Gastrocnemius medialis (tissue), 4 donors: ENCODE measurements at regions of chr10 and their contacts with region 1.

Region 1: DNA sequence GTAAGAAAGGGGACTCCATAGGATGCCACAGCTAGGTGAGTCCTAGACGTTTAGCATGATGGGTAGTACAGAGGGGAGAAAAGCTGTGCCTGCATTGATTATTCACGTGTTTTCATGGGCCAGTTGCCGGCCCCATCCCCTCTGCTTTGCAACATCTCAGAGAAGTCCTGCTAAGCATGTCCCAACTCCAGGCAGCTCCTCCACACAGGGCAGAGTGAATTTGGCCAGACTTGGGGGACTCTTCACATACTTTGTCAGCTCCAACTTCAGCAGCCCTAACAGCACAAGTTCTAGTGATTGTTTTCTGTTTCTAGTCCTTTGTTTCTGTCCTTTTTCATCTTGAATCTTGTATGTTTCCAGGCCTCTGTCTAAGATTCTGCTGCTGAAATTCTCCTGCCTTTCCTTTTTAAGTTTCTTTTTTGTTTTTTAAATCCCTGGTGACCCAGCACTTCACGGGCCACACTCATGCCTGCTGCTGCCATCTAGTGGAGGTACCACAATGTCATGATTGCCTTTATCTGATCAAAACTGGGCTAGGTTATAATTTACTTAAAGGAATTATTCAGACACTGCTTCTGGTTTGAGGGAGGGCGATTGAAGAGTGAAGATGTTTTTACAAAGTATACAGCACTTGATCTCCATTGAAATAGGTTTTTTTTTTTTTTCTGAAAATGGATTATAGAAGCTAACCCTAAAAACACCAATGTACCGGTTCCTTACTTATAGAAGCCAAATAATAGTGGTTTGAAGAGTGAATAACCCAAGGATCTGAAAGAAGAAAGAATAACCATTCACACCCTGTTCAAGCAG is 276.9 kb downstream of the CSTF2T start:
- DNase-seq: peak; percentile 12 to 45
- ATAC-seq: peak; percentile 55 to 79
- H3K4me3 ChIP-seq: peak overlapping the region in 2 of 4 donors; percentile 6 to 35
- H3K27ac ChIP-seq: peak overlapping the region; percentile 52 to 74 (median 54)
- H3K4me1 ChIP-seq: peaks cover 17 to 37% of the 10 kb centered on the region in 2 donors
- H3K27me3 ChIP-seq: no peaks in the 10 kb centered on the region
- CTCF ChIP-seq: peak; percentile 56 to 83 (median 69)
- POLR2A ChIP-seq: no peak

Region 2: DNA sequence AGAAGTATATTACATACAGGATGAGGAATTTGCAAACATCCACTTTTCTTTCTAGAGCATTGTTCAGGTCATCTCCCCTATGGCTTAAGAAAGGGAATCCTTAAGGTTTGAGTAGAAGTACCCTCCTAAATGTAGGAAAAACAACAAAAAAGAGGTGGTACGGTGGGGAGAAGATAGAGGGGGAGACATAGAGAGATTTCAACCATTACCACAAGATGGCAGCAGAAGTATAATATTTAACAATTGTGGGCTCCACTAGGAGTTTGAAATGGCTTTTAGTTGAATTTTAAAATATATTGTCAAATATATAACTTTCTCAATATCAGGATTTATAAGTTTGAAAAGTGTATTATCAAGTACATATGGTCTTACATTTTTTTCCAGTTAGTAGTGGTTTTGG is 420.9 kb before region 1 on chr10:
- in situ Hi-C with region 1: loop called in 2 of 4 experiments (anchors 10 kb)
- intact Hi-C with region 1: loop called (anchors 2 kb)
- DNase-seq: no peak
- ATAC-seq: peak; percentile 50 to 72
- H3K4me3 ChIP-seq: no peak overlapping the region
- H3K27ac ChIP-seq: peak overlapping the region in 2 of 4 donors; percentile 1 to 25
- H3K4me1 ChIP-seq: peaks cover 43 to 65% of the 10 kb centered on the region in 2 donors
- H3K27me3 ChIP-seq: no peaks in the 10 kb centered on the region
- CTCF ChIP-seq: peak; percentile 45 to 66 (median 53)
- POLR2A ChIP-seq: no peak

Region 3: DNA sequence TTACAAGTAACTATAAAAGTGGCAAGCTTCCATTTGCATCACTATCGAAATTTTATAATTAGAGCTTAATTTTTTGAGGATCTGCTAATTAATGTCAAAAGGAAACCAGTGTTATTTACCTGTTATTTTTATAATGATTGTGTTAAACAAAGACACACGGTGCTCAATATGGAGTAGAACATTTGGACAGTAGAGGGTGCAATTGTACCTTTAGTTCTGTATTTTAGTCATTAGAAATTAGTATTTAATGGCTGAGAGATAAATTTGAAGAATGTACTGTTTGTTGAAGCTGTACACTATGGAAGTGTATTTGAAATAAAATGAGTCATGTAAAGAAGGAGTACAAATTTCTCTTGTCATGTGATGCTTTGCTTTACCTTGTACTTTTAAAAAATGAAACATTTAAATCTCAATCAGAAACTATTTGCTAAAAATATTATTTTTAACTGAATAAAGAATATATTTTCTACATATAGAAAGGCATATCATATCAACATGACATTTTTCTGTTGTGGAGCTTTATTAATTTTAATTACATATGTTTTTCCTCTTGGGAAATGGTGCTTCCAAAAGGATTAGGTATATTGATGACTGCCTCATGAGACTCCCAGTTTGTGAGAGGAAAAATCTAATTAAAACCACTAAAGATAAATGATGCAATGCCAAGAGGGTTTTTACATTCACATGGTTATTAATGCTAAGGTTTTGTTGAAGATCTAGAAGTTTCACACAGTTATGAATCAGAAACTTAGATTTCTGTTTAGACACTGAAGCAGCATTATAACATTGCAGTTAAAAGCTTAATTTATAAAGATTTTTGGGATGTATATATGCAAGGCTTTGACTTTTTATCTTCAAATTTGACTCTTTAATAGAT is 358.6 kb before region 1 on chr10:
- in situ Hi-C with region 1: loop called in 2 of 4 experiments (anchors 5 to 25 kb)
- intact Hi-C with region 1: loop called (anchors 2 kb)
- DNase-seq: no peak
- ATAC-seq: peak in 1 of 2 donors; percentile 41
- H3K4me3 ChIP-seq: no peak overlapping the region
- H3K27ac ChIP-seq: no peak overlapping the region
- H3K4me1 ChIP-seq: peaks cover 0 to 4% of the 10 kb centered on the region in 2 donors
- H3K27me3 ChIP-seq: no peaks in the 10 kb centered on the region
- CTCF ChIP-seq: peak; percentile 12 to 59 (median 49)
- POLR2A ChIP-seq: no peak

Region 4: GRCh38 chr10:51074238-51075028 is 348.1 kb before region 1 on chr10 and contains the start of gene PRKG1:
- in situ Hi-C with region 1: loop called in 3 of 4 experiments (anchors 5 to 25 kb)
- intact Hi-C with region 1: no loop called
- DNase-seq: peak; percentile 46 to 57
- ATAC-seq: peak; percentile 83 to 87
- H3K4me3 ChIP-seq: peak within 1 kb of the TSS; percentile 67 to 89 (median 79)
- H3K27ac ChIP-seq: peak within 1 kb of the TSS; percentile 45 to 81 (median 70)
- H3K4me1 ChIP-seq: peaks cover 12 to 14% of the 10 kb centered on the region in 2 donors
- H3K27me3 ChIP-seq: no peaks in the 10 kb centered on the region
- CTCF ChIP-seq: no peak
- POLR2A ChIP-seq: no peak
- total RNA-seq, gene PRKG1: 10.4 to 39.4 (median 25.1) TPM

Region 5: GRCh38 chr10:51389415-51390321 is 32.8 kb before region 1 on chr10:
- in situ Hi-C with region 1: no loop called
- intact Hi-C with region 1: loop called (anchors 5 kb)
- DNase-seq: no peak
- ATAC-seq: peak in 1 of 2 donors; percentile 30
- H3K4me3 ChIP-seq: no peak overlapping the region
- H3K27ac ChIP-seq: no peak overlapping the region
- H3K4me1 ChIP-seq: peaks cover 3 to 4% of the 10 kb centered on the region in 2 donors
- H3K27me3 ChIP-seq: no peaks in the 10 kb centered on the region
- CTCF ChIP-seq: peak; percentile 44 to 68 (median 59)
- POLR2A ChIP-seq: no peak

Region 6: GRCh38 chr10:51462076-51462779 is 39.7 kb after region 1 on chr10:
- in situ Hi-C with region 1: no loop called
- intact Hi-C with region 1: no loop called
- DNase-seq: no peak
- ATAC-seq: peak; percentile 67 to 73
- H3K4me3 ChIP-seq: peak overlapping the region in 3 of 4 donors; percentile 0 to 10 (median 6)
- H3K27ac ChIP-seq: peak overlapping the region; percentile 36 to 80 (median 57)
- H3K4me1 ChIP-seq: peaks cover 13 to 45% of the 10 kb centered on the region in 2 donors
- H3K27me3 ChIP-seq: no peaks in the 10 kb centered on the region
- CTCF ChIP-seq: no peak
- POLR2A ChIP-seq: no peak

Region 7: DNA sequence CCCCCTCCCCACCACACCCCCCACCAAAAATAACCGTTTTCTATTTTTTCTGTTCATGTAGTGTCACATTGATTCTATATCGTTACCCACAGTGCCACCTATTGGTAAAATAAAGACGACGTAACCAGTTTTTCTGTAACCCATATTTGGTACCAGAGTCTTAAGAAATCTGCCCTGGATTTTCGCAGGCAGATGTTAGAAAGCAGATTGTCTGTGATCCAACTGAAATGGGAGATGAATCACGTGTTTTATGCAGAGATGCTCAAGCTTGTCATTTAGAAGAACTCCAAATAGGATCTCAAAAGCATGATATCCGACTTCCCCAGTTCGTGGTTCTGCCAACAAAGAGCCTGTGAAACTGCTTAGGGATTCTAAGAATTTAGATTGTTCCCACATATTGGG is 538.0 kb after region 1 on chr10:
- in situ Hi-C with region 1: loop called in 2 of 4 experiments (anchors 25 kb)
- intact Hi-C with region 1: no loop called
- DNase-seq: no peak
- ATAC-seq: peak; percentile 78 to 89
- H3K4me3 ChIP-seq: no peak overlapping the region
- H3K27ac ChIP-seq: no peak overlapping the region
- H3K4me1 ChIP-seq: peaks cover 4 to 12% of the 10 kb centered on the region in 2 donors
- H3K27me3 ChIP-seq: no peaks in the 10 kb centered on the region
- CTCF ChIP-seq: peak; percentile 35 to 61 (median 46)
- POLR2A ChIP-seq: no peak